GM12878 (cell line): ENCODE measurements at regions of chr13 and their contacts with region 1.

Region 1: DNA sequence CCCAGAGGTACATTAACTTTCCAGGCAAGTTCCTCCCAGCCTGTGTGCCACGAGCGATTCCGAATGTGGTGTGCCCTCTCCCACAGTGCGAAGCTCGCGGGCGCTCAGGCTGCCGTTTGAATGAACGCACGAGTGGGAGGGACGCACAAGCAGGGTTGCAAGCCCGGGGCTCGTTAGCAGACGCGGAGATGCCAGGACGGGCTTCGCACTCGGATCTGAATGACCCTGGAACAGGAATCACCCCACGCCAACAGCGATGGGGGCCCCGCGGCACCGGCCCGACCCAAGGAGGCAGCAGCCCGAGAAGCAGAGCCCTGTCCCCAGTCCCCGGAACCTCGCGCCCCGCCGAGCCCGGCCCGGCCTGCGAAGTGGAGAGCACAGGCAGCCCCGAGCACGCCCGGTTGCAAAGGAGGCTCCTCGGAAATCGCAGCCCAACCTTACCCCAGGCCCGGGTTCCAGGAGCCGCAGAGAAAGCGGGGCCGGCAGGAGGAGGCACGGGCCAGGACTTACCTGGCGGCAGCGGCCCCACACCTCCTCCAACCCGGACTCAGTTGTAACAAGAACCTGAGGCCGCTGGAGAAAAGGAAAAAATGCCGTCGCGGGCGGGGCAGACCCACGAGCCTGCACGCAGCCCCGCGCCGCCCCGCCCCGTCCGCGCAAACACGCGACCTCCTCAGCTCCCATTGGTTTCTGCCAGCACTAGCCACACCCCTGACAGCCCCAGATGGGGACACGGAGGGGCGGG is at the start of gene SLC25A30:
- DNase-seq: peak; percentile 51
- ATAC-seq: peak; percentile 96
- H3K4me3 ChIP-seq: peak within 1 kb of the TSS; percentile 83
- H3K27ac ChIP-seq: peak within 1 kb of the TSS; percentile 72
- H3K4me1 ChIP-seq: no peaks in the 10 kb centered on the region
- H3K27me3 ChIP-seq: no peaks in the 10 kb centered on the region
- CTCF ChIP-seq: no peak
- EP300 ChIP-seq: no peak
- POLR2A ChIP-seq: peak; percentile 71
- RAD21 ChIP-seq: no peak
- polyA plus RNA-seq, gene SLC25A30: 2.4 to 2.7 TPM

Region 2: GRCh38 chr13:45340926-45341750 is 76.8 kb before region 1 on chr13 and contains the start of gene TPT1:
- CTCF ChIA-PET with region 1: no interaction called
- POLR2A ChIA-PET with region 1: interaction called, 6 read pairs
- RAD21 ChIA-PET with region 1: interaction called, 3 read pairs
- SMC1A ChIA-PET with region 1: interaction called, 5 read pairs
- in situ Hi-C with region 1: no loop called
- intact Hi-C with region 1: loop called (anchors 1 kb)
- DNase-seq: peak; percentile 96
- ATAC-seq: peak; percentile 93
- H3K4me3 ChIP-seq: peak within 1 kb of the TSS; percentile 90
- H3K27ac ChIP-seq: peak within 1 kb of the TSS; percentile 94
- H3K4me1 ChIP-seq: peaks cover 12% of the 10 kb centered on the region
- H3K27me3 ChIP-seq: no peaks in the 10 kb centered on the region
- CTCF ChIP-seq: no peak
- EP300 ChIP-seq: peak; percentile 25 to 44; a peak in 2 of 4 replicates
- POLR2A ChIP-seq: peak; percentile 99
- RAD21 ChIP-seq: no peak
- polyA plus RNA-seq, gene TPT1: 1,130 to 2,045 TPM

Region 3: GRCh38 chr13:45393941-45394570 is 23.9 kb before region 1 on chr13:
- CTCF ChIA-PET with region 1: interaction called, 17 read pairs
- POLR2A ChIA-PET with region 1: no interaction called
- RAD21 ChIA-PET with region 1: interaction called, 5 read pairs
- SMC1A ChIA-PET with region 1: interaction called, 17 read pairs
- in situ Hi-C with region 1: no loop called
- intact Hi-C with region 1: no loop called
- DNase-seq: no peak
- ATAC-seq: peak; percentile 87
- H3K4me3 ChIP-seq: no peak overlapping the region
- H3K27ac ChIP-seq: no peak overlapping the region
- H3K4me1 ChIP-seq: peaks cover 10% of the 10 kb centered on the region
- H3K27me3 ChIP-seq: no peaks in the 10 kb centered on the region
- CTCF ChIP-seq: peak; percentile 44 to 70 (median 68); a peak in 5 of 6 replicates
- EP300 ChIP-seq: no peak
- POLR2A ChIP-seq: no peak
- RAD21 ChIP-seq: peak; percentile 50

Region 4: GRCh38 chr13:45433381-45433790 is 15.4 kb after region 1 on chr13:
- CTCF ChIA-PET with region 1: no interaction called
- POLR2A ChIA-PET with region 1: no interaction called
- RAD21 ChIA-PET with region 1: no interaction called
- SMC1A ChIA-PET with region 1: no interaction called
- in situ Hi-C with region 1: no loop called
- intact Hi-C with region 1: no loop called
- DNase-seq: no peak
- ATAC-seq: no peak
- H3K4me3 ChIP-seq: no peak overlapping the region
- H3K27ac ChIP-seq: no peak overlapping the region
- H3K4me1 ChIP-seq: no peaks in the 10 kb centered on the region
- H3K27me3 ChIP-seq: no peaks in the 10 kb centered on the region
- CTCF ChIP-seq: no peak
- EP300 ChIP-seq: no peak
- POLR2A ChIP-seq: no peak
- RAD21 ChIP-seq: no peak

Region 5: DNA sequence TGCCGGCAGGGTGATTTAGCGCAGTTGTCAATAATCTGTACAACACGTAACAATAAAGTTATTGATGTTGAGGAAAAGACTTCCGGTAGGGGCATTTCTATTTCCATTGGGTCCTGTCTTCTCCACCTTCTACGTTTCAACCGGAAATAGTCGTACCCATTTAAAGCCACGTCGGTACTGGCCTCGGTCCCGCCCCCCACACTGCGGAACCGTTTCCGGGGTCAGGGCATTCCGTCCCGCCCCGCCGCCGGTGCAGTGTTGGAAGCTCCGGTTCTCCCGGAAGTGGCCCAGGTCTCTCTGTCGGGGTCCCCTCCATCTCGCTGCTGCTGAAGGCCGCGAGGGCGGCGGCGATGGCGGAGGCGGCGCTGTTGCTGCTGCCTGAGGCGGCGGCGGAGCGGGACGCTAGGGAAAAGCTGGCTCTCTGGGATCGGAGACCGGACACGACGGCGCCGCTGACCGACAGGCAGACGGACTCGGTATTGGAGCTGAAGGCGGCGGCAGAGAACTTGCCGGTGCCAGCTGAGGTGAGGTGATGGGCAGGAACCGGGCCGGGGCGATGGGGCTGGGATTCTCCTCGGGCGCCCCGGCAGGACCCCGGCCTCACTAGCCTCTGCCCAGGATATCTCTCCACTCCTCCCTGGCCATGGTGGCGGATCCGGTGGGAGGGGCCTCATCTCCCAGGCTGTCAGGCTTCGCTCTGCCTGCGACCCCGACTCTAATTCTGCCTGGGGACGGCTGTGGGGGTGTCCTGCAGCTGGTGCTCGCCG is 46.9 kb after region 1 on chr13 and contains the start of gene COG3:
- CTCF ChIA-PET with region 1: interaction called, 3 read pairs
- POLR2A ChIA-PET with region 1: interaction called, 3 read pairs
- RAD21 ChIA-PET with region 1: no interaction called
- SMC1A ChIA-PET with region 1: interaction called, 12 read pairs
- in situ Hi-C with region 1: no loop called
- intact Hi-C with region 1: loop called (anchors 1 kb)
- DNase-seq: peak; percentile 92
- ATAC-seq: peak; percentile 97
- H3K4me3 ChIP-seq: peak within 1 kb of the TSS; percentile 71
- H3K27ac ChIP-seq: peak within 1 kb of the TSS; percentile 90
- H3K4me1 ChIP-seq: peaks cover 6% of the 10 kb centered on the region
- H3K27me3 ChIP-seq: no peaks in the 10 kb centered on the region
- CTCF ChIP-seq: peak in 2 of 3 experiments; percentile 44 to 46; a peak in 4 of 6 replicates
- EP300 ChIP-seq: peak in 1 of 2 experiments; percentile 14; a peak in 1 of 4 replicates
- POLR2A ChIP-seq: peak; percentile 92
- RAD21 ChIP-seq: peak; percentile 38
- polyA plus RNA-seq, gene COG3: 6.1 to 9.3 TPM

Region 6: GRCh38 chr13:45490068-45490467 is 72.1 kb after region 1 on chr13:
- CTCF ChIA-PET with region 1: interaction called, 12 read pairs
- POLR2A ChIA-PET with region 1: interaction called, 3 read pairs
- RAD21 ChIA-PET with region 1: no interaction called
- SMC1A ChIA-PET with region 1: interaction called, 4 read pairs
- in situ Hi-C with region 1: no loop called
- intact Hi-C with region 1: no loop called
- DNase-seq: no peak
- ATAC-seq: peak; percentile 88
- H3K4me3 ChIP-seq: no peak overlapping the region
- H3K27ac ChIP-seq: no peak overlapping the region
- H3K4me1 ChIP-seq: no peaks in the 10 kb centered on the region
- H3K27me3 ChIP-seq: no peaks in the 10 kb centered on the region
- CTCF ChIP-seq: peak; percentile 29 to 55 (median 47); a peak in 5 of 6 replicates
- EP300 ChIP-seq: no peak
- POLR2A ChIP-seq: no peak
- RAD21 ChIP-seq: peak; percentile 79

Region 7: DNA sequence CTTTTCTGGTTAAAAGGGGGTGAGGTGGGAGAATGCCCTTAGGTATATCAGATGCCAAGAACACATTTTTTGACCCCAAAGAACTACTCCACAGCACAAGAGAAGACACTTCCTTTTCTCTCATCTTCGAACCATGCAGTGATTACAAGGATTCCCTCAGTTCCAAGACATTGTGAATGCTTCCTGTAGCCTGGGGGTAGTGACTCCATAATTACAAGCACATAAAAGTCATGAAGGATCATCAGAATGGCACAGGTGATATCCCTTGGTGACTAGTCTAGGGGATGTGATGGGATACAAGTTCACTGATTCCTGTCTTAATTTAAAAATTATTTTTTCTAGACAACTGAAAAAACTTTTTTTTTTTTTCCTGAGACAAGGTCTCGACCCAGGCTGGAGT is 556.5 kb after region 1 on chr13:
- CTCF ChIA-PET with region 1: no interaction called
- POLR2A ChIA-PET with region 1: no interaction called
- RAD21 ChIA-PET with region 1: no interaction called
- SMC1A ChIA-PET with region 1: no interaction called
- in situ Hi-C with region 1: no loop called
- intact Hi-C with region 1: no loop called
- DNase-seq: no peak
- ATAC-seq: no peak
- H3K4me3 ChIP-seq: no peak overlapping the region
- H3K27ac ChIP-seq: no peak overlapping the region
- H3K4me1 ChIP-seq: no peaks in the 10 kb centered on the region
- H3K27me3 ChIP-seq: no peaks in the 10 kb centered on the region
- CTCF ChIP-seq: no peak
- EP300 ChIP-seq: no peak
- POLR2A ChIP-seq: no peak
- RAD21 ChIP-seq: no peak

Region 8: DNA sequence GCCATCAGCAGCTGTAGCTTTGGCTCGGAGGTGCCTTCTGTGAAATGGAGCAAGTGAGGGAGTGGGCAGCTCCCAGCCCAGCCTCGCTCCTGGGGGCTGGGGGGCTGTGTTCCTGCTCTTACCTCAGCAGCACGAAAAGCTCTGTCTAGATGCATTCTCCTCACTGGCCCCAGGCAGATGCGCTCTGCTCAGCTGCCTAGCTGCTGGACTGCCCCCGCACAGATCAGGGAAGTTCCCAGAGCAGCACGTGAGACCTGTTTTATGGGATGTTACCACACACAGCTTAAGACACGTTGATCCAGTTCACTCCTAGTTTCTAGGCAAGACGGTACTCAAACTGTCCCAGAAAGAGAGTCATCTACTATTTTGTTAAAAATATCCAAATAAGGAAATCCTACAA is 750.4 kb after region 1 on chr13:
- CTCF ChIA-PET with region 1: no interaction called
- POLR2A ChIA-PET with region 1: no interaction called
- RAD21 ChIA-PET with region 1: no interaction called
- SMC1A ChIA-PET with region 1: no interaction called
- in situ Hi-C with region 1: no loop called
- intact Hi-C with region 1: loop called (anchors 5 kb)
- DNase-seq: no peak
- ATAC-seq: peak; percentile 52
- H3K4me3 ChIP-seq: peak overlapping the region; percentile 72
- H3K27ac ChIP-seq: peak overlapping the region; percentile 85
- H3K4me1 ChIP-seq: peaks cover 65% of the 10 kb centered on the region
- H3K27me3 ChIP-seq: no peaks in the 10 kb centered on the region
- CTCF ChIP-seq: no peak
- EP300 ChIP-seq: no peak
- POLR2A ChIP-seq: peak; percentile 72
- RAD21 ChIP-seq: no peak